SK-N-SH (cell line): ENCODE measurements at regions of chr4 and their contacts with region 1.

Region 1: DNA sequence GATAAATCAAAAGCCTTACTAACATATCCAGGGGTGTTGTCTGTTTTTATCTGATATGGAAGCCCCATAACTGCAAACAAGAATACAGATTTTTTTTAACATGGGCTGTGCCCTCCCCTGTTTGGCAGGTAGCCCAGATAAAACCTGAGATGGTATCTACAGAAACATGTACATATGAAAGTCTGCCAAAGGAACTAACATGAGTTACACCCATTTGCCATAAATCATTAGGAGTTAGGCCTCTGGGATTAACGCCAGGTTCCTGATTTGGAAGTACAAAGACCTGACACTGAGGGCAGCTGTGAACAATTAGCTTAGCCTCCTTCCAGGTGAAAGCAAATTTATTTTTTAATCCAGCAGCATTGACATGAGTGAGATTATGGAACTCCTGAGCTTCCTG is 264.3 kb downstream of the TECRL start:
- DNase-seq: no peak
- H3K4me3 ChIP-seq: no peak overlapping the region
- H3K27ac ChIP-seq: no peak overlapping the region
- H3K4me1 ChIP-seq: no peaks in the 10 kb centered on the region
- H3K27me3 ChIP-seq: no peaks in the 10 kb centered on the region
- CTCF ChIP-seq: no peak
- EP300 ChIP-seq: no peak
- RAD21 ChIP-seq: no peak

Region 2: GRCh38 chr4:63764400-63764799 is 380.6 kb before region 1 on chr4:
- CTCF ChIA-PET with region 1: no interaction called
- POLR2A ChIA-PET with region 1: no interaction called
- DNase-seq: no peak
- H3K4me3 ChIP-seq: no peak overlapping the region
- H3K27ac ChIP-seq: no peak overlapping the region
- H3K4me1 ChIP-seq: no peaks in the 10 kb centered on the region
- H3K27me3 ChIP-seq: no peaks in the 10 kb centered on the region
- CTCF ChIP-seq: no peak
- EP300 ChIP-seq: no peak
- RAD21 ChIP-seq: no peak

Region 3: DNA sequence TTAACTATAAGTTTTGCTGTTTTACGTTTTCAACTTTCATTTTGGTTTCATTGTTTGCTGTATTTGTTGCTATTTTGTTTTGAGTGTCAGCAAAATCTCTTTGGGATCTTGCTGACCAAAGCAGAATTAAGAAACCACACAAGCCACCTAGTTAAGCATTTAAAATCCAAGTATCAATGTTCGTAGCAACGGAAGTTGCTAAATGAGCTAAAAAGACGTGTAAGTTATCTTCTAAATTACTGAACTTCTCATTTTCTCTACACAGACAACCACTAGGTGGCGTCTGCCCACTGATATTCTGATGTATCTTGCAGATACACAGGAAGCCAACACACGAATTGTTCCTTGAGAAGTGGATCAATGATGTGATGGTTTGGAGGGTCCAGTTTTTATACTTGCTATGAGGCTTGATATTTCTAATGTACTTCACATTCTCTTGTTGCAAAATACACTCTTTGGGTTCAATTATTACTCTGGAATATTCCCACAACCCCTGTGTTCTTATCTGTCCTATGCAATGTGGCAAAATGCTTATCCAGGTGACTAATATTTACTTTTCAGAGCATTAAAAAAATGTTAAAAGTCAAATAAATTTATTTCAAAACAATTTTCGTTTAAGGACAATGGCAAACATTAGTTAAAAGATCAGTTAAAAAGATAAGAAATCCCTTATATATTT is 13.8 kb after region 1 on chr4:
- CTCF ChIA-PET with region 1: interaction called, 12 read pairs
- POLR2A ChIA-PET with region 1: no interaction called
- DNase-seq: peak; percentile 28
- H3K4me3 ChIP-seq: peak overlapping the region; percentile 43 to 61
- H3K27ac ChIP-seq: no peak overlapping the region
- H3K4me1 ChIP-seq: no peaks in the 10 kb centered on the region
- H3K27me3 ChIP-seq: no peaks in the 10 kb centered on the region
- CTCF ChIP-seq: peak; percentile 93
- EP300 ChIP-seq: no peak
- RAD21 ChIP-seq: peak; percentile 66